Heart left ventricle (tissue), 16 donors: ENCODE measurements at regions of chr20 and their contacts with region 1.

Region 1: DNA sequence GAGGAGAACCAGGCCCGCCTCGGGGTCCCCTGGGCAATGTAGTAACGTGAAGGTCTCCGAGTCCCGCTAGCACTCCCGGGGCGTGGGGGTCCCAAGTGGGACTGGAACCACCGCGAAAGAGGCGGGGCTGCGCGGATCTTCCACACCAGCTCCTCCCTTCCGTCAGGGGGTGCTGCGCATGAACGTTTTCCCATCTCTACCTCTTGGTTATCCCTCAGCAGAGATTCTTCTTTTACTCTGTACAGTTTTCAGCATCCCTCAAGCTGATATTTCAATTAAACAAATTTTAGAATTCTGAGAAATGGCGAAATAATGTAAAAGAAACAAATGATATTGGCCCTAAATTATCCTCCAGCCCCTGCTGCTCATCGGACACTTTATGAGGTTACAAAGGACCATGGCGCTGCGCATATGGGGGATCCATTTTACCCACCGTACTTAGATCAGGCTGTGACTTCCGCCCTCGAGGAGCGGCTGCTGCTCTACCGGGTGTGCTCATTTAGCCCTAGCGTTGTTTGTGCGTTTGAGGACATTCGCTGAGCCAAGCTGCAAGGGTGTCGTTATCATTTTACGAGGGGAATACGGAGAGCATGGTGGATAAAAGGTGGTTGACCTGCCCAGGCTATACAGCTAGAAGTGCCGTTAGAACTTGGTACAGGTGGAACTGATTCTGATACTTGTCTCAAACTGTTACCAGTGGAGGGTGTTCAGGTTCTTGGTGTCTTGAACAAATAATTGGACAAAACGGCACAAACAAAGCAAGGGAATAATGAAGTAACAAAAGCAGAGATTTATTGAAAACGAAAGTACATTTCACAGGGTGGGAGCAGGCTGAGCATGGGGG is 75.2 kb upstream of the CHD6 start:
- DNase-seq: peak; percentile 80 to 90 (median 84)
- ATAC-seq: peak; percentile 94 to 97 (median 96)
- H3K4me3 ChIP-seq: peak overlapping the region; percentile 56 to 87 (median 73)
- H3K27ac ChIP-seq: peak overlapping the region; percentile 82 to 95 (median 90)
- H3K4me1 ChIP-seq: peaks cover 0 to 25% (median 6%) of the 10 kb centered on the region in 12 donors
- H3K27me3 ChIP-seq: no peaks in the 10 kb centered on the region
- CTCF ChIP-seq: peak; percentile 38 to 85 (median 56)
- POLR2A ChIP-seq: peak in 1 of 2 donors; percentile 33

Region 2: DNA sequence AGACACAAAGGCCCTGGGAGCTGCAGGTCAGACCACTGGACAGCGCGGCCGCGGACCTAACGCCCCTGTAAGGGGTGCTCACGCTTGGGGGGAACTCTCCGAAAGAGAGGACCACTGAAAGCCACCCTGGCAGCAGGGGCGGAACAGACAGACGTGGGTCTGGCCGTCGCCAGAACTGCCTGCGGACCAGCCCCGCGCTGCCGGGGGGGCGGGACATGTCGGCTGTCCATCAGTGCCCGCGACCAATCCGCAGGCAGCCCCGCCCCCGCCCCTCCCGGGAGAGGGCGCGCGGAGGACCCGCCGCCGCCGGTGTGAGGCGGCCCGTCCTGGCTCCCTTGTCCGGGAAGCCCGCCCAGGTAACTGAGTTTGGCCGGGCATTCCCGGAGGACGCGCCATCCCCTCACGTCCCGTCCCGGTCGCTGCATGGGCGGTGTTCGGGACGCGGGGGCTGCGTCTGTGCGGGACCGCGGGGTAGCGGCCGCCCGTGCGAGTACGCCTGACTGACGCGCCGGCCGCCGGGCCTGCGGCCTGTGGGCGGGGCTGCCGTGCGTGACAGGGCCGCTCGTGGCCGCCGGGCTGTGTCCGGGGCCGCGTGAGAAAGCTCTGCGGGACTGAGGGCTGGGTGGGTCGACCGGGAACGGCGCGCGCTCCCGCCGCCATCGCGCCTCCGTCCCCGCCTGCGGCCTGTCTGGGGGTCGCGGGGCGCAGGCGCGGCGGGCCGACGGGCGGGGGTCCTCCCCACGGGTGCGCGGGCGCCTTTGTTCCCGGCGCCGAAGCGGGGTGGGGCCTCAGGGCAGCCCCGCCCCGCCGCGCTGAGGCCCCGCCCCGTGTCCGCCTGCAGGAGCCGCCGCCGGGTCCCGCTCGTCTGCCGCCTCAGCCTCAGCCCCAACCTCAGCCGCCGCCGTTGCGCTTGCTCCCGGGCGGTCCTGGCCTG is 556.4 kb before region 1 on chr20 and contains the start of gene PLCG1:
- intact Hi-C with region 1: loop called in 1 of 10 experiments (anchors 5 kb)
- DNase-seq: peak; percentile 91 to 95 (median 93)
- ATAC-seq: peak; percentile 76 to 89 (median 85)
- H3K4me3 ChIP-seq: peak within 1 kb of the TSS; percentile 56 to 100 (median 94)
- H3K27ac ChIP-seq: peak within 1 kb of the TSS; percentile 89 to 100 (median 98)
- H3K4me1 ChIP-seq: peaks cover 6 to 52% (median 43%) of the 10 kb centered on the region in 12 donors
- H3K27me3 ChIP-seq: peaks cover 0 to 4% (median 0%) of the 10 kb centered on the region in 9 donors
- CTCF ChIP-seq: peak in 1 of 12 donors; percentile 12
- POLR2A ChIP-seq: peak; percentile 38 to 85
- total RNA-seq, gene PLCG1: 32.5 to 72.2 (median 55.9) TPM

Region 3: DNA sequence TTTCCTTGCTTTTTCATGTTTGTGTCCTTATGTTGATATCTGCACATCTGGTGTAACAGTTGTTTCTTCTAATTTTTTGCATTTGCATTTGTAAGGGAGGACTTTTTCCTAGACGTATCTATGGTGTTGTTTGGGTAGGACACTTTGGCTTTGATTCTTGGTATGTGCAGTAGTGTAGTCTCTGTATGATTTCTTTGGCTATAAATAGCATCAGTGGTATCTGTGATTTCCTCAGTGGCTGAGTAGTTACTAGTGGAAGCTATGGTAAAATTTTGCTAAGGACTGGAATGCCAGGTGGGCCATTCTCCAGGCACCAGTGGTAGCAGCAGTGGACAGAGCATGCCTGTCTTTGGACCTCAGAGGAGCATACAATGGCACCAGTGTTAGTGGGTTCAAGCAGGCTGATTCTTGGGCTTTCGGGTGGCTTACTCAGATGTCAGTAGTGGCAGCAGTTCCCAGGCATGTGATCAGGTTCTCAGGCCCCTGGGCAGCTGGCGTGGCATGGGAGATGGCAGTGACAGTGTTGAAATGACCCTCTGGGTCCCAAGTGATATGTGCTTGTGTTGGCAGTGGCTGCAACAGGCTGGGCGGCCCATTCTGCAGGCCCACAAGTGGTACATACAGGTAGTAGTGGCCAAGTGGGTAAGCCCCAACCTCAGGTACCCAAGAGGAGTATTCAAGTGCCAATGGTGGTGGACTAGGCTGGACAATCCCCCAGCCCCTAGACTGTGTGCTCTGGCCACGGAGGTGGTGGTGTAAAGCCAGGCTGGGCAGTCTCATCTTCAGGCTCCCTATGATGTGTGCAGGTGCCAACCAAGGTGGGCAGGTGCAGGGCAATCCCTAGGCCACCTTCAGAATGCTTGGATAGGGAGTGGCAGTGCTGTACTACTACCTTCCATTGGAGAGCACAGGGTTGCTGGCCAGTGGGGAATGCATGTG is 501.5 kb before region 1 on chr20:
- intact Hi-C with region 1: no loop called
- DNase-seq: no peak
- ATAC-seq: peak in 2 of 4 donors; percentile 24 to 39
- H3K4me3 ChIP-seq: no peak overlapping the region
- H3K27ac ChIP-seq: no peak overlapping the region
- H3K4me1 ChIP-seq: peaks cover 0 to 8% (median 0%) of the 10 kb centered on the region in 12 donors
- H3K27me3 ChIP-seq: no peaks in the 10 kb centered on the region
- CTCF ChIP-seq: no peak
- POLR2A ChIP-seq: no peak

Region 4: GRCh38 chr20:41453010-41453950 is 240.1 kb before region 1 on chr20:
- intact Hi-C with region 1: no loop called
- DNase-seq: no peak
- ATAC-seq: peak in 1 of 4 donors; percentile 26
- H3K4me3 ChIP-seq: no peak overlapping the region
- H3K27ac ChIP-seq: no peak overlapping the region
- H3K4me1 ChIP-seq: peaks cover 0 to 5% (median 0%) of the 10 kb centered on the region in 12 donors
- H3K27me3 ChIP-seq: no peaks in the 10 kb centered on the region
- CTCF ChIP-seq: no peak
- POLR2A ChIP-seq: no peak

Region 5: GRCh38 chr20:41467220-41467619 is 226.1 kb before region 1 on chr20:
- intact Hi-C with region 1: loop called in 2 of 10 experiments (anchors 5 to 10 kb)
- DNase-seq: no peak
- ATAC-seq: no peak
- H3K4me3 ChIP-seq: no peak overlapping the region
- H3K27ac ChIP-seq: no peak overlapping the region
- H3K4me1 ChIP-seq: peaks cover 0 to 31% (median 15%) of the 10 kb centered on the region in 12 donors
- H3K27me3 ChIP-seq: no peaks in the 10 kb centered on the region
- CTCF ChIP-seq: no peak
- POLR2A ChIP-seq: no peak

Region 6: GRCh38 chr20:41476013-41476752 is 217.2 kb before region 1 on chr20:
- intact Hi-C with region 1: loop called in 1 of 10 experiments (anchors 10 kb)
- DNase-seq: peak in 4 of 5 donors; percentile 19 to 33 (median 32)
- ATAC-seq: peak; percentile 70 to 86 (median 82)
- H3K4me3 ChIP-seq: no peak overlapping the region
- H3K27ac ChIP-seq: peak overlapping the region in 10 of 12 donors; percentile 4 to 55 (median 30)
- H3K4me1 ChIP-seq: peaks cover 0 to 25% (median 17%) of the 10 kb centered on the region in 12 donors
- H3K27me3 ChIP-seq: no peaks in the 10 kb centered on the region
- CTCF ChIP-seq: no peak
- POLR2A ChIP-seq: no peak

Region 7: GRCh38 chr20:41509316-41510200 is 183.8 kb before region 1 on chr20:
- intact Hi-C with region 1: loop called in 4 of 10 experiments (anchors 5 to 10 kb)
- DNase-seq: peak in 4 of 5 donors; percentile 38 to 59 (median 50)
- ATAC-seq: peak; percentile 78 to 88 (median 81)
- H3K4me3 ChIP-seq: no peak overlapping the region
- H3K27ac ChIP-seq: peak overlapping the region in 11 of 12 donors; percentile 5 to 75 (median 38)
- H3K4me1 ChIP-seq: peaks cover 0 to 60% (median 39%) of the 10 kb centered on the region in 12 donors
- H3K27me3 ChIP-seq: no peaks in the 10 kb centered on the region
- CTCF ChIP-seq: no peak
- POLR2A ChIP-seq: no peak

Region 8: DNA sequence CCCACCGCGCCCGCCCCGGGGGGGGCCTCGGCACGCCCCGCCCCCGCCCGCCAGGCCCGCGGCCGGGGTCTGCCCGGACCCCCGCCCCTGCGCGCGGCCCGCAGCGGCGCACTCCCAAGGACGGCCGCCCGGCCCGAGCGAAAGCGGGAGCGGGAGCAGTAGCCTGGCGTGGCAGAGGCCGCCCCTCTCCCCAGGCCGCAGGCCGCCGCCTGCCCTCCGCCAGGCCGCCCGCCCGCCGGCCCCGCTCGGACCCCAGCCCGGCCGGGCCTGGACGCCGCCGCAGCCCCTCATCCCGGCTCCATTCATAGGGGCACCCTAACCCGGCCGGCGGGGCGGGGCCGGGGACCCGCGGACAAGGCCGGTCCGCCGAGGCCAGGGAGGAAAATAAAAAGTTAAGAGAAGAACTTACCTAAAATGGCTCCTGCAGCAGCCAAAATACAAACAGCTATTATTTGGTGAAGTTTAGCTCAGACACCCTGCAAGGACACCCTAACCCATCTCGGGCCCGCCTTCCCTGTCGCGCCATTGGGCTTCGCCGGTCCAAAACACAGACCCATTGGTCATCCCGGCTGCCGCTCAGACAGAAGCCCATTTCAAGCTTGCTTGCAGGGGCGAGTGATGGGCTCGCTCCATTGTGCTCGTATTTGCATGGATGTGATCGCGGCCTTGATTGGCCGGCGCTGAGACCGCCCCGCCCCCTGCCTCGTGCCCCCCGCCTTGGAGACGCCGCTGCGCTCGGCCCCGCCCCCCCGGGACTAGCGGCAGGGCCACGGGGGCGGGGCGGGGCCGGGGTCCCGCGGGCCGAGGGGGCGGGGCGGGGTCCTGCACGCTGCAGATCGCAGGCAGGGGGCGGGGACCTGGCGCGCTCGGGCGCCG is 75.2 kb before region 1 on chr20 and contains the start of gene CHD6:
- intact Hi-C with region 1: loop called in 5 of 10 experiments (anchors 5 kb)
- DNase-seq: peak; percentile 100
- ATAC-seq: peak; percentile 99 to 100 (median 99)
- H3K4me3 ChIP-seq: peak within 1 kb of the TSS; percentile 60 to 95 (median 74)
- H3K27ac ChIP-seq: peak within 1 kb of the TSS; percentile 79 to 95 (median 86)
- H3K4me1 ChIP-seq: peaks cover 0 to 39% (median 30%) of the 10 kb centered on the region in 12 donors
- H3K27me3 ChIP-seq: no peaks in the 10 kb centered on the region
- CTCF ChIP-seq: peak in 2 of 12 donors; percentile 7 to 15
- POLR2A ChIP-seq: peak in 1 of 2 donors; percentile 61
- total RNA-seq, gene CHD6: 19.8 to 52.8 (median 41.4) TPM